ENCODE measurements at regions of chr11 and their contacts with region 1.

Region 1: DNA sequence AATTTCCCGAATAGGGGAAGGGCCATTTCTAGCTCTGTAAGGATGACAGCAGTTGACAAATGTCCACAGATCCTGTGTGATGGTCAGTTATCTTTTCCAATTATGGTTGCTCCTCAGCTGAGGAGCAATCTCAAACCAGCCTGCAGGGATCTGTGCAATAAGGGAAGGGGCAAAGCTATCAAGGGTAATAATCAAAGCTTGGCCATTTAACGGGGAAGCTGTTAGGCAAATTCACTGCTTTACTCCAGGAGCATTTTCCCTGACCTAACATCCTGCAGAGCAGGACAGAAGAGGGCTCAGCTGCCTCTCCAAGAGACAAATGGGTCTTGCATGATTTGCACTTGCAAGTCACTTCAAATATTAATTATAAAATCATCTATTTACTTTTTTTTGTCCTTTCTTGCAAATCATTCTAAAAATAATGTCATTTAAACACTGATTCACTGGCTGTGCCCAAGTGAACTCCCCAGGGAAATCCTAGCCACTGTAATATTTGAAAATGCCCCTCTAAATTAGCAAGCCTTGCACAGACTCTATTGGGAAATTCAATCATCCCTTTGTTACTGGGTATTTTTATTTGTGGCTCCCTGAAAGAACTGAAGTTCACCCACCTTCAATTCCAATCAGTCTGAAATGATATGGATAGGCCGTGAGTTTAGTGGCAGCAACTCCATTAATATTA is 1256.7 kb downstream of the LRRC4C start:
- DNase-seq: no peak
- H3K4me3 ChIP-seq: no peak overlapping the region
- H3K27ac ChIP-seq: peak overlapping the region in 53 of 59 donors; percentile 4 to 81 (median 49)
- H3K27me3 ChIP-seq: no peaks in the 10 kb centered on the region
- CTCF ChIP-seq: no peak

Region 2: DNA sequence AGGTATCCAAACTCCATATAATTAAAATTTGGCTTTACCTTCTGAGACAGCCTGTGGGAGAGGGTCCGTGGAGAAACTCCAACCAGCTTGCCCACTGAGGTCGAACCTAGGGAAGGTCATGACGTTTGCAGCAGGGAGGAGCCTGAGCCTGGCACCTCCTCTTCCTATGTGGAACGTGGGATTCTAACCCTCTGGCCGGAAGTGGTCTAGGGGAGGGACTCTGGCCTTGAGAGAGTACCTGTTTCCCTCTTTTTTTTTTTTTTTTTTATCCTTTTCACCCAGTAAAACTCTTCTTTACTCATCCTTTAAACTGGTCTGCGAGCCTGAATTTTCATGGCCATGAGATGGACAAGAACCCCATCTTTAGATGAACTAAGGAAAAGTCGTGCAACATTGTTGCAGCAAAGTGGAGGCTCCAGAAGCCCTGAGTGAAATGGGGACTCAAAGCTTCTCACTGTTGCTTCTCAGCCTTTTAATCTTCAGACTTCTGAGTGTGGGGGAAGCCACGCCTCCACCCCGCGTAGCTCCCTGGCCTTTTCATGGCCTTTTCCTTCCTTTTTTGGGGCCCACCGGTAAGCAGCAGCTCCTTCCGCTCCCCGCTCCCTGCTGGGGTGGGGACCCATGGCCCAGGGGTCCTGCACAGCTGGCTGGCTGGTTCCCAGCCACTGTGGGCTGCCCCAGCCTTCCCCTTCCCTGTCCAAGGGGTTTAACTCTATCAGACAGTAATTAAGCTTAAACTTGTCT is 103.1 kb before region 1 on chr11:
- intact Hi-C with region 1: no loop called
- DNase-seq: no peak
- H3K4me3 ChIP-seq: no peak overlapping the region
- H3K27ac ChIP-seq: no peak overlapping the region
- H3K27me3 ChIP-seq: no peaks in the 10 kb centered on the region
- CTCF ChIP-seq: no peak

Region 3: GRCh38 chr11:40186437-40187266 is 16.1 kb before region 1 on chr11:
- intact Hi-C with region 1: loop called in 1 of 2 experiments (anchors 2 kb)
- DNase-seq: peak in 9 of 10 donors; percentile 23 to 80 (median 58)
- H3K4me3 ChIP-seq: peak overlapping the region in 37 of 59 donors; percentile 0 to 51 (median 26)
- H3K27ac ChIP-seq: peak overlapping the region; percentile 83 to 99 (median 97)
- H3K27me3 ChIP-seq: no peaks in the 10 kb centered on the region
- CTCF ChIP-seq: peak in 2 of 56 donors; percentile 10 to 15

Measured in dorsolateral prefrontal cortex (tissue), 120 donors.